Calu3 (cell line): ENCODE measurements at regions of chr4 and their contacts with region 1.

Region 1: GRCh38 chr4:139499026-139499585 is 45.2 kb downstream of the RAB33B start:
- DNase-seq: no peak
- H3K4me3 Mint-ChIP-seq: no peak overlapping the region
- H3K27ac Mint-ChIP-seq: no peak overlapping the region
- H3K4me1 Mint-ChIP-seq: no peaks in the 10 kb centered on the region
- H3K27me3 Mint-ChIP-seq: no peaks in the 10 kb centered on the region
- CTCF ChIP-seq: no peak

Region 2: DNA sequence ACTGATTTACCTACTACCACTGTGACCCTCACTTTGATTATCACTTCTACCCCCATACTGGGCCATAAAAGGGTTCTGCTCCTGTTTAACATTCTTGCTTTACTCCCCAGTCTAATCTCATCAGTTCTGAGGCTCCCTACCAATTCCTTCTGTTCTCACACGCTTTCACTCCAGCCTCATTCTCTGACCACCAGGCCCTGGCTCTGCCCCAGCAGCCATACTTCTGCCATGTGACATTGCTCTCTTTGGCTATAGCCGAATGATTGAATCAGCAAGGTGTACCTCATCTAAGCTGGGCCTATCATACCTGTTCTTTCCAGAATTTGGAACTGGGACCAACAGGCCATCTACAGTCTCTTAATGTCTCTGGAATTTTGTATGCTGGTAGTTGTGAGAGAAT is 307.7 kb before region 1 on chr4:
- CTCF ChIA-PET with region 1: no interaction called
- intact Hi-C with region 1: no loop called
- DNase-seq: no peak
- H3K4me3 Mint-ChIP-seq: no peak overlapping the region
- H3K27ac Mint-ChIP-seq: no peak overlapping the region
- H3K4me1 Mint-ChIP-seq: no peaks in the 10 kb centered on the region
- H3K27me3 Mint-ChIP-seq: no peaks in the 10 kb centered on the region
- CTCF ChIP-seq: no peak

Region 3: GRCh38 chr4:139454111-139455045 is 44.7 kb before region 1 on chr4 and contains the start of gene RAB33B:
- CTCF ChIA-PET with region 1: interaction called, 3 read pairs
- intact Hi-C with region 1: loop called (anchors 5 kb)
- DNase-seq: no peak
- H3K4me3 Mint-ChIP-seq: peak within 1 kb of the TSS; percentile 96
- H3K27ac Mint-ChIP-seq: peak within 1 kb of the TSS; percentile 94
- H3K4me1 Mint-ChIP-seq: peaks cover 43% of the 10 kb centered on the region
- H3K27me3 Mint-ChIP-seq: no peaks in the 10 kb centered on the region
- CTCF ChIP-seq: no peak
- total RNA-seq, gene RAB33B: 5.9 and 6.2 TPM in 2 replicates

Region 4: GRCh38 chr4:139550724-139551429 is 51.8 kb after region 1 on chr4:
- CTCF ChIA-PET with region 1: no interaction called
- intact Hi-C with region 1: no loop called
- DNase-seq: no peak
- H3K4me3 Mint-ChIP-seq: no peak overlapping the region
- H3K27ac Mint-ChIP-seq: no peak overlapping the region
- H3K4me1 Mint-ChIP-seq: peaks cover 13% of the 10 kb centered on the region
- H3K27me3 Mint-ChIP-seq: no peaks in the 10 kb centered on the region
- CTCF ChIP-seq: no peak